Right ventricle myocardium superior (tissue), 1 donor: ENCODE measurements at regions of chr15 and their contacts with region 1.

Region 1: GRCh38 chr15:38072348-38073177 is 138.1 kb downstream of the TMCO5A start:
- DNase-seq: peak; percentile 86
- ATAC-seq: peak; percentile 94

Region 2: DNA sequence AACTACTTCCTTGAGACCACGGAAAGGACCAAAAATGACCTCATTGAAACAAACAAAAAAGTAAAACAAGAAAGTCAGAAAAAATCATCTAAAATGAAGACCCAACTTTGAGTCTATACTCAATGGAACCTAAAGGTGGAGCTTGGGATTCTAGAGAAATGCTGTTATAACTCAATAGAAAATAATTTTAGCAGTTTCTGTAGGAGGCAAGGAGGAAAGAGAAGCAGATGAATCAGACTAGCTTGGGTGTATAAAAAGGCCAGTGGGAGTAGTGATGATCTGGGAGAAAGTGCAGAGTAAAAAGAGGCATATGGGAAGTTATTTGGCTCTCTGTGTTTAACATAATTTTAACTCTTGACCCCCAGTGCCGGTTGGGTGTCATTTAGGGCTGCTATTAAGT is 43.7 kb before region 1 on chr15:
- intact Hi-C with region 1: no loop called
- DNase-seq: no peak
- ATAC-seq: no peak

Region 3: DNA sequence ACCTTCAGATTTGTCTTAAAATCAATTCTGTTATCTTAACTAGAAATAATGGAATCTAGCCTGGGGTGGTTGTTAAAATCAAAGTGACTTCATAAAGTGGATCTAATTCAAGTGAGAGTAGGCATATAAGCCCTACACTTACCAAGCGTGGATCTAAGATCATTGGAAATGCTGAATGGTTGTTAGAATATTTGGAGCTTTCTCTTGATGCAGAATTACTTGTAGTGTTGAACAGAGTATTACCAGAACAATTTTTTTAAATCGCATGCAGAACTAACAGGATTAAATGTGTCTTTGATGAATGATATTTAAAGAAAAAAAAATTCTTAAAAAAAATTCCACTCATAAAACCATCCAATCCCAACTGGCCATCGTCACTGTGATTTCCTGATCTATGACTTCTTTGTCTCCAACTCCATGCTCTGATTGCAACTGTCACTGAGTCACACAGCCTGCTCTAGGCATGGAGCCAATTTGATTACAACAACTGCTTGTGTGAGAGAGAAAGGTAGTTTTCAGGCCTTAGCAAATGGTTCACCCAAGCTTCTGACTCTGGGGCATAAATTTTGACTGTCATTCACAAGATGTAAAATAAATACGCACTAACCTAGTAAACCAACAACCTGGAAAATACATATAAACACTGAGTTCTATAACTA is 154.2 kb after region 1 on chr15:
- intact Hi-C with region 1: loop called (anchors 10 kb)
- DNase-seq: no peak
- ATAC-seq: peak; percentile 79

Region 4: DNA sequence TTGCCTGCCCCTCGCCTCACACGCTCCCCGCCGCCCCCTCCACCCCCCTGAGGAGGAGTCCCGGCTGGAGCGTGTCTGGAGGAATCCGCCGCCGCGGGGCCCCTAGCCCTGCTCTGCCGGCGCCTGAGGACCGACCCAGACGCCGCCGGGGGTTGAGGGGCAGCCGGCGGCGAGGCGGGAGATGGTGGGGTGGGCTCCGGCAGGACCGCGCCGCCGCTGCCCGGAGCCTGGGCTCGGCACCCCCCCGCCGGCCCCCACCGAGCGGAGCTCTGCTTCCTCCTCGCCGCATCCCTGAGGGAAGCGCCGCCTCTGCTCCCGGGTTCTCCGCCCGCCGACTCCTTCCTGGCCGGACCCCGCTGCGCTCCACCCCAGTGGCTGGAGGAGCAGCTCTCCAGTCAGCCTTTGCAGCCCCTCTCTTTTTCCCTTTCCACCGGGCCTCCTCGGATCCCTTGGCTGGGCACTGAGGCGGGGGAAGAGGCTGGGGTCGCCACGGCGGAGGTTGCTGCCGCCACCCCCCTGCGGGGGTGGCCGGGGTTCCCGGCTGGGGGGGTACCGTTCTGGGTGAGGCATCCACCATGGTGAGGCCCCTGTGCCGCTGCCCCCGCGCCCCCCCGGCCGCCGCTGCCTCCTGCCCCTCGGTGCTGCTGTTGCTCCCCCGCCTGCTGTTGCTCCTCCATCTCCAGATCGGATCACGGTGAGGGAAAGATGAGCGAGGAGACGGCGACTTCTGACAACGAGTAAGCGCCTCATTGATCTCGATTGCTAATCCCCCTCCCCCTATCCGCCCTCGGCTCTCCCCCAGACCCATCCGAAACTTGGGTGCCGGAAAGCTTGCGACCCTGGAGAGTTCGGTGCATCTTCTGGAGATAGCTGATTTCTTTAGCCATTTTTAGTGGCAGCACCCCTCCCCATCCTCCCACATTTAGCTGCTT is 180.2 kb after region 1 on chr15 and contains the start of gene SPRED1:
- intact Hi-C with region 1: loop called (anchors 5 kb)
- DNase-seq: peak; percentile 86
- ATAC-seq: peak; percentile 71
- total RNA-seq, gene SPRED1: 9.8 TPM

Region 5: GRCh38 chr15:38354315-38354929 is 281.9 kb after region 1 on chr15:
- intact Hi-C with region 1: loop called (anchors 10 kb)
- DNase-seq: peak; percentile 55
- ATAC-seq: peak; percentile 81